ENCODE measurements at regions of chr2 and their contacts with region 1.

Region 1: DNA sequence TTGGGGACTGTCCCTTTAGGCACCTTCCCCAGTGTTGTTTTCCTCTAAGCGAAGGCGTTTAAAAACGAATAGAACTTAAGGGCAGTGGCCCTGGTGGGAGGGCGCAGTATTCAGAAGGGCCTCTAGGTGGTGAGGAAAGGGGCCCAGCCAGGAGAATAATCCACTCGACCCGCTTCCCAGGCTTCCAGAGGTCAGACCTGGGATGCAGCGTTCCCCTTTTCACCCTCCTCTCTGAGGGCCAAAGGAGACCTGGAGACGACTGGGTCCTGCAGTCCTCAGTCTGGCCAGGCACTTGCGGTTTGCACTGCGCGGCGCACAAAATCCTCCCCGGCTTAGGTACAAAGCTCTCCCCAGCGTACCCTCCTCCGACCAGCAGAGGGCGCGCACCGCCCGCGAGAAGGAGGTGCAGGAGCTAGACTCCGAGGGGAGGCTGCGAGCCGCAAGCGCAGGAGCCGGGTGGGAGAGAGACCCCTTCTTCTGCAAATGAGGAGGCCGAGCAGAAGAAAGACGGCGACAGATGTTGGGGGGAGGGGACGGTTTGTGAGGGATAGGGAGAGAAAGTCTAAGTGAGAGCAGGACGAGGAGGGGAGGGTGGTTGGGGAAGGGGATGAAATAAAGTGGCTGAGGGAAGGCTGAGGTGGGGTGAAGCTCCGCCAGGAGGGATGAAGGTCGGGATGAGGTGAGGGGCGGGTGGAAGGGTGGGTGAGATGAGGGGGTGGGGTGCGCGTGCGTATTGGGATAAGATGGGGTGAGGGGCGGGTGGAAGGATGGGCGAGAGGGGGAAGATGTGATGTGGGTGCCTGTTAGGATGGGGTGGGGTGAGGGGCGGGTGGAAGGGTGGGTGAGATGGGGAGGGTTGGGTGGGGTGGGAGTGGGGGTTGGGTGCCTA is 4.9 kb downstream of the FEV start:
- DNase-seq: peak; percentile 90
- H3K4me3 ChIP-seq: peak overlapping the region; percentile 38
- H3K27ac ChIP-seq: no peak overlapping the region
- H3K4me1 ChIP-seq: peaks cover 8% of the 10 kb centered on the region
- H3K27me3 ChIP-seq: peaks cover 34% of the 10 kb centered on the region
- CTCF ChIP-seq: peak; percentile 99

Region 2: GRCh38 chr2:218958276-218958675 is 21.8 kb before region 1 on chr2:
- CTCF ChIA-PET with region 1: interaction called, 10 read pairs
- POLR2A ChIA-PET with region 1: no interaction called
- intact Hi-C with region 1: no loop called
- DNase-seq: no peak
- H3K4me3 ChIP-seq: peak overlapping the region; percentile 53
- H3K27ac ChIP-seq: no peak overlapping the region
- H3K4me1 ChIP-seq: peaks cover 17% of the 10 kb centered on the region
- H3K27me3 ChIP-seq: peaks cover 29% of the 10 kb centered on the region
- CTCF ChIP-seq: no peak

Region 3: GRCh38 chr2:218995972-218996711 is 16.1 kb after region 1 on chr2:
- CTCF ChIA-PET with region 1: interaction called, 19 read pairs
- POLR2A ChIA-PET with region 1: no interaction called
- intact Hi-C with region 1: no loop called
- DNase-seq: peak; percentile 86
- H3K4me3 ChIP-seq: peak overlapping the region; percentile 39
- H3K27ac ChIP-seq: no peak overlapping the region
- H3K4me1 ChIP-seq: peaks cover 16% of the 10 kb centered on the region
- H3K27me3 ChIP-seq: peaks cover 58% of the 10 kb centered on the region
- CTCF ChIP-seq: peak; percentile 93

Region 4: DNA sequence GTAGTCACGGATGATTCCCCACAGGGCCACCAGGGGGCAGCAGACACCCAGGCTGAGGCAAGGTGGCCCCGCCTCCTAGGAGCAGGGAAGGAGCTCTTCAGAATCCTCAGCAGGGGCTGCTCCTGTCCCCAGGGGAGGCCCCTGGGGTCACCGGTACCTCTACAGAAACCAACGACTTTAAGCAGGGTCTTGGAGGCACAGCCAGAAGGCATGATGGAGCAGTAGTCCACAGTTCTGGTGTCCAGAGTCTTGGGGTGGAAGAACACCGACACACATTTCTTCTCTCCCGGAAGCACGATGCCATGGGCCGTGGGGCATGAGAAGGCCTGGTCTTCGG is 49.7 kb after region 1 on chr2:
- CTCF ChIA-PET with region 1: no interaction called
- POLR2A ChIA-PET with region 1: interaction called, 10 read pairs
- intact Hi-C with region 1: no loop called
- DNase-seq: peak; percentile 86
- H3K4me3 ChIP-seq: no peak overlapping the region
- H3K27ac ChIP-seq: no peak overlapping the region
- H3K4me1 ChIP-seq: no peaks in the 10 kb centered on the region
- H3K27me3 ChIP-seq: peaks cover 22% of the 10 kb centered on the region
- CTCF ChIP-seq: peak; percentile 92

Region 5: GRCh38 chr2:219155054-219155644 is 175.1 kb after region 1 on chr2:
- CTCF ChIA-PET with region 1: interaction called, 14 read pairs
- POLR2A ChIA-PET with region 1: no interaction called
- intact Hi-C with region 1: loop called (anchors 5 kb)
- DNase-seq: peak; percentile 91
- H3K4me3 ChIP-seq: no peak overlapping the region
- H3K27ac ChIP-seq: no peak overlapping the region
- H3K4me1 ChIP-seq: peaks cover 4% of the 10 kb centered on the region
- H3K27me3 ChIP-seq: no peaks in the 10 kb centered on the region
- CTCF ChIP-seq: peak; percentile 56

Region 6: DNA sequence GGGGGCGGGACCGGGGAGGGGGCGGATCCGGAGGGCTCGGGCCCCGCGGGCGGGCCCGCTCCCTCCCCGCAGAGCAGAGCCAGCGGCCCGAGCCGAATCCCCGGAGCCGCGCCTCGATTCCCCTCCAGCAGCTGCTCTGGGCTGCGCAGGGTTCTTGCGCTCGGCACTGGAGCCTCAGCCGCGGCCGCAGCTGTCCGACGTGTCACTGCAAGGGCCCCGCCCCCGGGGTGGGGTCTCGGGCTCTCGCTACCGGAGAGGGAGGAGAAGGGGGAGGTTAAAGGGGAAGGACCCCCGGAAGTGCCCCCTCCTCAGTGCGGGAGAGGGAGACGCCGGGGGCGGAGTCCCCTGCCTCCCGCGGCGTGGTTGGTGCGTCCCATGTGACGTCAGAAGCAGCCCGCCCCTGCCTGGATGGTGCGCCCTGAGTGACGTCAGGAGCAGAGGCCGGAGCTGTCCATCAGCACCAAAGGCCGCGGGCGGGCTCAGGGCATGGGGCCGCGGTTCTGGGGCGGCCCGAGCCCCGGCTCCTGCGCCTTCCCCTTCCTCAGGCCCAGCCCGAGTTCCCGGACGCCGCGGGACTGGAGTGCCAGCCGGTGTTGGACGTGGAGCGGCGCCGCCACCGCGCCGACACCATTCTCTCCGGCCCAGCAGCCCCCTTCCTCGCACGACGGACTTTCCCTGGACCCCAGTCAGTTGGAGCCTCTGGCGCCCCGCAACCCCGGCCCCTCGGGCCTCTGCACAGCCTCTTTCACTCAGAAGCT is 563.7 kb after region 1 on chr2 and contains the starts of genes CHPF and TMEM198:
- CTCF ChIA-PET with region 1: no interaction called
- POLR2A ChIA-PET with region 1: no interaction called
- intact Hi-C with region 1: no loop called
- DNase-seq: peak; percentile 97
- H3K4me3 ChIP-seq: peak within 1 kb of the TSS; percentile 64
- H3K27ac ChIP-seq: peak within 1 kb of the TSS; percentile 73
- H3K4me1 ChIP-seq: peaks cover 11% of the 10 kb centered on the region
- H3K27me3 ChIP-seq: no peaks in the 10 kb centered on the region
- CTCF ChIP-seq: no peak
- total RNA-seq, gene CHPF: 13.8 and 15.8 TPM in 2 replicates
- total RNA-seq, gene TMEM198: 4.6 and 7.6 TPM in 2 replicates